ENCODE measurements at regions of chr9 and their contacts with region 1.

Region 1: DNA sequence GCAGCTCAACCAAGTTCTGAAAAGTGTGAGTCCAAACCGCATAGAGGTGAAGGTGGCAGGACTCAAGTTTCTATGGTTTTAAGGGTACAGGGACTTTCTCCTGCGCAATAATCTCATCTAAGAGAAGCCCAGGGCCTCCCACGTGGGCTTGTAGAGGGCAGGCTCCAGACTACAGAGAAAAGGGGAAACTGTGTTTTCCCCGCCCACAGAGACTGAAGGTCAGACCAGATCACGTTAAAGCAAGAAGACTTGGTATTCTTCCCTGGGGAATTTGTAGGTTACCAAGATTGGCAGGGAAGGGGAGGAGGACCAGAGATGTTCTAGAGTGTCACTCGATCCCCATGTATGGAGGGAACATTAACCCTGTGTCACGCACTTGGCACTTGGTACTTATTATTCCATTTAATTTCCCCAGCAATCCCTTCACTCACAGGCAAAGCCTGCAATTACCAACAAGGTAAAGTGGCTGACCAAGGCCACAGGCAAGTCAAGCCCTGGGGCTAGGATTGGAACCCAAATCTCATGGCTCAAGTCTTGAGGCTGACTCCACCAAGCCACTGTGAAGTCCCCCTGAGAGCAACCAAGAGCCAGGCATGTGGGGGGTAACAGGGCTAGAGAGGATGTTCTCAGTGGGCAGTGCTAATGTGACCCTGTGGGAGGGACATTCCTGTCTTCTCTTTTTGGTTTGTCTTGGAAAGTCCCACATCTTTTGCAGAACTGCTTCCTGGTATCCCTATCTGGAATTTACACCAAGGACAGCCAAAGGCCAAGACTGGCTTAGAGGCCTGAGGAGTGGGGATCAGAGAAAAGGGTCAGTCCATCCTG is 18.3 kb upstream of the NEK6 start:
- DNase-seq: no peak
- H3K4me3 Mint-ChIP-seq: no peak overlapping the region
- H3K27ac Mint-ChIP-seq: no peak overlapping the region
- H3K4me1 Mint-ChIP-seq: peaks cover 29% of the 10 kb centered on the region
- H3K27me3 Mint-ChIP-seq: peaks cover 4% of the 10 kb centered on the region

Region 2: DNA sequence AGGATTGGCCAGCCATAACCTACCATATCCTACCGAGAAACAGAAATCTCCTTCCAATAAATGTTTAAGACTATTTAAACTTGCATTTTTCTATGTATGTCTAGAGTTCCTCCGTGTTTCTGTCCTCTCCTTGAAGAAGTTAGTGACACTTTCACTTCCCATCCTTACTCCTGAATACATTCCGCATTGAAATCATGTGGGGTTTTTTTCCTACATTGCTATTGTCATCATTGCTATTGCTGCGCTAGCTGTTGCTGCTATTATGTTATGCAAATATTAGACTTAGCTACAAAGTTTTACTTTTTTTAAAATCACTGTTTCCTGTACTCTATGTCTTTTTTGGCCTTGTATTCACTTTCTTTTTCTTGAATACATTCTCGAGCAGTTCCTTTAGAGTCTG is 65.0 kb before region 1 on chr9:
- CTCF ChIA-PET with region 1: no interaction called
- POLR2A ChIA-PET with region 1: no interaction called
- intact Hi-C with region 1: no loop called
- DNase-seq: no peak
- H3K4me3 Mint-ChIP-seq: no peak overlapping the region
- H3K27ac Mint-ChIP-seq: no peak overlapping the region
- H3K4me1 Mint-ChIP-seq: peaks cover 40% of the 10 kb centered on the region
- H3K27me3 Mint-ChIP-seq: no peaks in the 10 kb centered on the region

Region 3: GRCh38 chr9:124187311-124187710 is 52.1 kb before region 1 on chr9:
- CTCF ChIA-PET with region 1: no interaction called
- POLR2A ChIA-PET with region 1: no interaction called
- intact Hi-C with region 1: no loop called
- DNase-seq: no peak
- H3K4me3 Mint-ChIP-seq: no peak overlapping the region
- H3K27ac Mint-ChIP-seq: no peak overlapping the region
- H3K4me1 Mint-ChIP-seq: no peaks in the 10 kb centered on the region
- H3K27me3 Mint-ChIP-seq: no peaks in the 10 kb centered on the region

Region 4: GRCh38 chr9:124218438-124218982 is 21.0 kb before region 1 on chr9:
- CTCF ChIA-PET with region 1: interaction called, 4 read pairs
- POLR2A ChIA-PET with region 1: interaction called, 3 read pairs
- intact Hi-C with region 1: loop called (anchors 2 kb)
- DNase-seq: peak; percentile 76
- H3K4me3 Mint-ChIP-seq: no peak overlapping the region
- H3K27ac Mint-ChIP-seq: peak overlapping the region; percentile 25
- H3K4me1 Mint-ChIP-seq: peaks cover 56% of the 10 kb centered on the region
- H3K27me3 Mint-ChIP-seq: no peaks in the 10 kb centered on the region